Activated T-helper 1 cell treated with anti-CD3 and anti-CD28 coated beads, Interleukin-12 subunit alpha, Interleukin-12 subunit beta, Interleukin-2, Interleukin-4 antibody, amounts not matched to agents 30 ng/mL and 10 ng/mL and 1 ng/mL, durations not matched to agents 14 hours and 24 hours and 36 hours (primary cell): ENCODE measurements at regions of chr9 and their contacts with region 1.

Region 1: GRCh38 chr9:129988607-129989361 is 54.2 kb downstream of the FNBP1 start:
- DNase-seq: no peak
- H3K4me3 Mint-ChIP-seq: peak overlapping the region; percentile 8
- H3K27ac Mint-ChIP-seq: peak overlapping the region; percentile 88
- H3K4me1 Mint-ChIP-seq: peaks cover 55% of the 10 kb centered on the region
- H3K27me3 Mint-ChIP-seq: no peaks in the 10 kb centered on the region

Region 2: DNA sequence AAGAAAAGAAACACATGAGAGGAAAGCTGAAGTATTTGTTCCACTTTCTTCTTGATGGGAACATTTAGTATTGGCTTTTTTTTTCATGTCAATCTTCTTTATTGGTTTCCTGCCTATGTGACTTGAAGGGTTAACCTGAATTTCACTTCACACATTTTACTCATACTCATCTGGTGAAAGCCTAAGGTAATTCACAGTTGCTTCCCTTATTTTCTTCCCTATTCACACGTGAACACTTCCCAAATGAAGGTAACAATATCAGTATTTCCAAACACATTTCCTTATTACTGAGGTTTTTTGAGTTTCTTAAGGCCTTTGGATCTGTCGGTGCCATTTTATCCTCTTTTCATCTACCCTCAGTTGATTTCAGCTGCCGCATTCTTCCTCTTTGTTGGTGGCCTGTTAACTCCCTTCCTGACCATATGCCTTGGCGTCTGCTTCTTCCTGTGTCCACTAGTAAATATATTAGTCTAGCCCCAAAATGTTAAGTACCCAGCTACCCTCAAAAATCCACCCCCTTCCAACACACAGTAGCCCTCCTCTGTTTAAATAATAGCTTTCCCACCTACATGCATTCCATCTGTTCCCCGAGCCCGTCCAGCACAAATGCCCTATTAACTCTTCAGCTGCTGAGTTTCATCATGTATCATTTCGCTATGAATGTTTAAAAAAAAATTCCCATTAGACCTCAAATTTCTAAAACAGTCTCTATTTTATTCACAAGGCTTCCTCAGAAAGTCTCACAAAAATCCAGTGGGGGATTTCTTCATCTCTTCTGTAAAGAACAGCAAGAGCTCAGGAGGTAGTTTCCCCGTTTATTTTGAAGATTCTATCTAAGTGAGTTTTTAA is 56.3 kb before region 1 on chr9:
- intact Hi-C with region 1: loop called (anchors 2 kb)
- DNase-seq: no peak
- H3K4me3 Mint-ChIP-seq: peak overlapping the region; percentile 66
- H3K27ac Mint-ChIP-seq: peak overlapping the region; percentile 92
- H3K4me1 Mint-ChIP-seq: peaks cover 57% of the 10 kb centered on the region
- H3K27me3 Mint-ChIP-seq: no peaks in the 10 kb centered on the region

Region 3: GRCh38 chr9:129968690-129969501 is 19.9 kb before region 1 on chr9:
- intact Hi-C with region 1: loop called (anchors 1 kb)
- DNase-seq: no peak
- H3K4me3 Mint-ChIP-seq: no peak overlapping the region
- H3K27ac Mint-ChIP-seq: peak overlapping the region; percentile 65
- H3K4me1 Mint-ChIP-seq: peaks cover 53% of the 10 kb centered on the region
- H3K27me3 Mint-ChIP-seq: no peaks in the 10 kb centered on the region